ENCODE measurements at regions of chr2 and their contacts with region 1.

Region 1: DNA sequence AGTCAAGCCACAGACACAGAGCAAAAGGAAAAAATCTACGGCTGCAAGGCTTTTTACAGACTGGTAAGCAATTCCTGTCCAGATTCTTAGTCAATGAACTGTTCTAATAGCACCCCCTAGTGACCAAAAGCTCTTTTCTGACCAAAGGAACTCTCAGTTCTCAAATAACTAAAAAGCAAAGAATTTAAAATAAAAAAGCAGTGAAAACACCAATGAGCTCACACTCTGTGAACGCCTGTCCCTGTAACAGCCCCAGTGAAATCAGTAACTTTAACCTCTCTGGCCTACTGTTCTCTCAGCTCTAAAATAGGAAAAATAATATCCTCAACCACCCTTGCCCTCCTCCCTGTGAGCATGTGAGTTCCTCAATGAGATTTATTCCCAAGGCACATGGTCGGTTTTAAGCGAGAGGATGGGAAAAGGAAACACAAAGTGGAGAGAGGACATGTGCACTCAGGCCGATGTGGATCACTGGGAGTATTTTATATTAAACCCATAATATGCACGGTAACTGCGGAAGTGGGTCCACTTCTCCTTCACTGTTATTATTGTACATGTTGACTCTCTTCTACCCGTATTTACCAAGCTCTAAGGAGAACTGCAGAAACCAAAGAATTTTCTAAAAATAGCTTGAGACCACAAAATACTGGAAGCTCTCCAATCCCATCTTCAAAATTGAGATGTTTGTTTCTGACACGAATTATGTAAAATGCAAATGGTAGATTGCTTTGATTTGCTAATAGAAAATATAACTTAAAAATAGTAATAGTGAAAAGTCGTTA is 128.5 kb downstream of the STK39 start:
- DNase-seq: peak in 1 of 2 experiments; percentile 79
- H3K4me3 ChIP-seq: no peak overlapping the region
- H3K4me3 Mint-ChIP-seq: no peak overlapping the region
- H3K27ac Mint-ChIP-seq: no peak overlapping the region
- H3K4me1 ChIP-seq: no peaks in the 10 kb centered on the region
- H3K4me1 Mint-ChIP-seq: no peaks in the 10 kb centered on the region
- H3K27me3 ChIP-seq: no peaks in the 10 kb centered on the region
- H3K27me3 Mint-ChIP-seq: no peaks in the 10 kb centered on the region
- CTCF ChIP-seq: peak; percentile 59 to 71

Region 2: GRCh38 chr2:166539340-166540162 is 1579.4 kb before region 1 on chr2:
- CTCF ChIA-PET with region 1: interaction called, 3 read pairs
- POLR2A ChIA-PET with region 1: no interaction called
- intact Hi-C with region 1: loop called (anchors 1 kb)
- DNase-seq: peak in 1 of 2 experiments; percentile 63
- H3K4me3 ChIP-seq: no peak overlapping the region
- H3K4me3 Mint-ChIP-seq: no peak overlapping the region
- H3K27ac Mint-ChIP-seq: no peak overlapping the region
- H3K4me1 ChIP-seq: no peaks in the 10 kb centered on the region
- H3K4me1 Mint-ChIP-seq: no peaks in the 10 kb centered on the region
- H3K27me3 ChIP-seq: no peaks in the 10 kb centered on the region
- H3K27me3 Mint-ChIP-seq: no peaks in the 10 kb centered on the region
- CTCF ChIP-seq: peak; percentile 79 to 80

Region 3: DNA sequence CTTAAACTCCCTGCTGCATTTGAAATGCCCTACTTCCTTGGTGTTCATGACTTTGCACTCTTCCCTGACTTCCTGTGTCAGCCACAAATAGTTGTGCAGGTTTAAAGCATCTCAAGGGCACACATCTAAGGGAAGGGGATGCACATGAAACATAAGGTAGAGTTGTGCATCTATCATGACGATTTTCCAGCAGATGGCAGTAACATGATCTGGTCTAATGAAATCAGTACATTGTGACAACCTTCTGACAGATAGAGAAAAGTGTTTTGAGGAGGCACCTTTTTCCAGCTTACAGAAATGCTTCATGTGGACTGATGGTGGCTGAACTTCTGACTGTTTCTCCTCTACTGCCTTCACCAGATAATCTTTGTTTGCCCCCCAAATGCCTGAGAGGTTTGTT is 991.8 kb before region 1 on chr2:
- CTCF ChIA-PET with region 1: no interaction called
- POLR2A ChIA-PET with region 1: no interaction called
- intact Hi-C with region 1: loop called (anchors 2 kb)
- DNase-seq: peak in 1 of 2 experiments; percentile 4
- H3K4me3 ChIP-seq: no peak overlapping the region
- H3K4me3 Mint-ChIP-seq: no peak overlapping the region
- H3K27ac Mint-ChIP-seq: no peak overlapping the region
- H3K4me1 ChIP-seq: no peaks in the 10 kb centered on the region
- H3K4me1 Mint-ChIP-seq: no peaks in the 10 kb centered on the region
- H3K27me3 ChIP-seq: no peaks in the 10 kb centered on the region
- H3K27me3 Mint-ChIP-seq: peaks cover 2% of the 10 kb centered on the region
- CTCF ChIP-seq: peak in 1 of 2 experiments; percentile 29

Region 4: DNA sequence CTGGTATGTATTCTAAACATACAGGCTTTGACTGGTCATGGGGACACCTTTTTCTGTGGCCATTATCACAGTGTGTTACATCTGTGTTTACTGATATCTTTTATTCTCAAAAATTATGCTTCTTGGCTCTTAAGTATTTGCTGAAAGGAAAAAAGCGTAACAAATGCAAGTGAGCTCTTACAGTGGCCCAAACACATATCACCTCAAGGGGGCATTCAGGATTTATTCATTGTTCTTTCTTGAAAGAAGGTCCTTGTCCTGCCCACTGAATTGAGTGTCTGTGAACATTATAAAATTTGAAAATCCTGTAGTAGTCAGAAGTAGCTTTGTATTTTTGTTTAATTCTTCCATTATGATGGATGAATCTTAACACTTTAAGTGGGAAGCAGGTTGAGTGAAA is 776.2 kb before region 1 on chr2:
- CTCF ChIA-PET with region 1: no interaction called
- POLR2A ChIA-PET with region 1: no interaction called
- intact Hi-C with region 1: loop called (anchors 2 kb)
- DNase-seq: no peak
- H3K4me3 ChIP-seq: no peak overlapping the region
- H3K4me3 Mint-ChIP-seq: no peak overlapping the region
- H3K27ac Mint-ChIP-seq: no peak overlapping the region
- H3K4me1 ChIP-seq: no peaks in the 10 kb centered on the region
- H3K4me1 Mint-ChIP-seq: no peaks in the 10 kb centered on the region
- H3K27me3 ChIP-seq: no peaks in the 10 kb centered on the region
- H3K27me3 Mint-ChIP-seq: peaks cover 8% of the 10 kb centered on the region
- CTCF ChIP-seq: peak in 1 of 2 experiments; percentile 22

Region 5: DNA sequence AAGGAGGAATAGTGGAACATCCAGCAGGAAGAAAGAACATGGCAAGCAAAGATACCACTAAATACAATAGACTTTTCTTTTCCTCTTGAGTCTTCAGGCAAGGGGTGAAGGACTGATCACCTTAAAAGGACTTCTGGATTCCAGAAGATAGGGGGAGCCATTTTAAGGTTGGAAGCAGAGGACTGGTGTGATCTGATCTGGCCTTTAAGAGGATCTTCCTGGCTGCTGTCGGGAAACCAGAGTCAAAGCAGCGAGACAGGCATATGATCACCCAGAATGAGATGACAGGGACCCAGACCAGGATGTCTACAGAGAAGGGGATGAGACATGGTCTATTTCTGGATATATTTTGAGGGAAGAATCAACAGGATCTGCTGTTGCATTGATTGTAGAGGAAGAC is 429.5 kb before region 1 on chr2:
- CTCF ChIA-PET with region 1: no interaction called
- POLR2A ChIA-PET with region 1: no interaction called
- intact Hi-C with region 1: loop called (anchors 2 kb)
- DNase-seq: peak in 1 of 2 experiments; percentile 35
- H3K4me3 ChIP-seq: no peak overlapping the region
- H3K4me3 Mint-ChIP-seq: no peak overlapping the region
- H3K27ac Mint-ChIP-seq: no peak overlapping the region
- H3K4me1 ChIP-seq: no peaks in the 10 kb centered on the region
- H3K4me1 Mint-ChIP-seq: no peaks in the 10 kb centered on the region
- H3K27me3 ChIP-seq: no peaks in the 10 kb centered on the region
- H3K27me3 Mint-ChIP-seq: peaks cover 2% of the 10 kb centered on the region
- CTCF ChIP-seq: peak; percentile 17 to 27

Region 6: DNA sequence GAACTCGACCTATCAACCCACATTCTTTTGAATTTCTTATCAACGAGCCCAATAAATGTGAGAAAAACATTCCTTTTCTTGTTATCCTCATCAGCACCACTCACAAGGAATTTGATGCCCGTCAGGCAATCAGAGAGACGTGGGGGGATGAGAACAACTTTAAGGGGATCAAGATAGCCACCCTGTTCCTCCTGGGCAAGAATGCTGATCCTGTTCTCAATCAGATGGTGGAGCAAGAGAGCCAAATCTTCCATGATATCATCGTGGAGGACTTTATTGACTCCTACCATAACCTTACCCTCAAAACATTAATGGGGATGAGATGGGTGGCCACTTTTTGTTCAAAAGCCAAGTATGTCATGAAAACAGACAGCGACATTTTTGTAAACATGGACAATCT is 249.7 kb before region 1 on chr2:
- CTCF ChIA-PET with region 1: no interaction called
- POLR2A ChIA-PET with region 1: no interaction called
- intact Hi-C with region 1: loop called (anchors 5 kb)
- DNase-seq: no peak
- H3K4me3 ChIP-seq: no peak overlapping the region
- H3K4me3 Mint-ChIP-seq: no peak overlapping the region
- H3K27ac Mint-ChIP-seq: no peak overlapping the region
- H3K4me1 ChIP-seq: no peaks in the 10 kb centered on the region
- H3K4me1 Mint-ChIP-seq: no peaks in the 10 kb centered on the region
- H3K27me3 ChIP-seq: no peaks in the 10 kb centered on the region
- H3K27me3 Mint-ChIP-seq: peaks cover 4% of the 10 kb centered on the region
- CTCF ChIP-seq: no peak

Region 7: DNA sequence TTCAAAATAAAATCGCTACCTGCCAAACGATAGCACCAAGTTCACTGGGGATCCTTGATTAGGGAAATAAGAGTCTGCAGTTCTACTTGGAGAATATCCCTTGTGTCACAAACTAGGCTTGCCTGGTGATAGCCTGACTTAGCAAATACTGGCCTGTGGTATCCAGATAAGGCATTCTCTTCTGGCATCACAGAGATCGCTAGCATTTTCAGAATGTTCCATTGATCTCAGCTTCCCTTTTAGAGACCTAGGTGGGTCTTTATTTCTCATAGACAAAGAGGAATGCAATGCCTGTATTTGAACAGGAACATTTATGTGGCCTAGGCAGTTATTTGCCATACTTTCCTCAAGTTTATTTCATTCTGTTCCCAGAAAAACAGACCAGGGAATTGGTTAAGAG is 220.6 kb before region 1 on chr2:
- CTCF ChIA-PET with region 1: no interaction called
- POLR2A ChIA-PET with region 1: no interaction called
- intact Hi-C with region 1: no loop called
- DNase-seq: no peak
- H3K4me3 ChIP-seq: no peak overlapping the region
- H3K4me3 Mint-ChIP-seq: no peak overlapping the region
- H3K27ac Mint-ChIP-seq: no peak overlapping the region
- H3K4me1 ChIP-seq: no peaks in the 10 kb centered on the region
- H3K4me1 Mint-ChIP-seq: no peaks in the 10 kb centered on the region
- H3K27me3 ChIP-seq: no peaks in the 10 kb centered on the region; the same call in 1 of the 2 replicates
- H3K27me3 Mint-ChIP-seq: peaks cover 14% of the 10 kb centered on the region
- CTCF ChIP-seq: no peak

Region 8: DNA sequence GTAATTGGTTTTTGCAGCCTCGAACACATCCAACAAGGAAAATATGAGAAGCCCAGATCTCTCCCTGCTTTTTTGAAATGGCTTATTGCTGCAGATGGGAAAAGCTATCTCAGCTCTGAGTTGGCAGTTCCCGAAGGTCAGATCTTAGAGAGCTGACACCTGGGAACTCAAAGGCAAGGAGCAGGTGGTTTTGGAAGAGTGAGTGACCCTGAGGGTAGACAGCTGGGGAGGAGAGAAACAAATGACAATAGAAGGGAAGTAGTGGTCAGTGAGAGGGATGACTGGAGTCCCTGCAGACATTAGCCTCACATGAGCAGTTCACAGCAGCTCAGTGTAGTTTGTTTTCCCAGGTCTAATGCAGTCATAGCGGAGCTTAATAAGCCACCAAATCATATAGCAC is 189.4 kb before region 1 on chr2:
- CTCF ChIA-PET with region 1: no interaction called
- POLR2A ChIA-PET with region 1: no interaction called
- intact Hi-C with region 1: no loop called
- DNase-seq: no peak
- H3K4me3 ChIP-seq: no peak overlapping the region
- H3K4me3 Mint-ChIP-seq: no peak overlapping the region
- H3K27ac Mint-ChIP-seq: no peak overlapping the region
- H3K4me1 ChIP-seq: no peaks in the 10 kb centered on the region
- H3K4me1 Mint-ChIP-seq: no peaks in the 10 kb centered on the region
- H3K27me3 ChIP-seq: no peaks in the 10 kb centered on the region
- H3K27me3 Mint-ChIP-seq: peaks cover 13% of the 10 kb centered on the region
- CTCF ChIP-seq: no peak